IMR-90 (cell line): ENCODE measurements at regions of chr14 and their contacts with region 1.

Region 1: DNA sequence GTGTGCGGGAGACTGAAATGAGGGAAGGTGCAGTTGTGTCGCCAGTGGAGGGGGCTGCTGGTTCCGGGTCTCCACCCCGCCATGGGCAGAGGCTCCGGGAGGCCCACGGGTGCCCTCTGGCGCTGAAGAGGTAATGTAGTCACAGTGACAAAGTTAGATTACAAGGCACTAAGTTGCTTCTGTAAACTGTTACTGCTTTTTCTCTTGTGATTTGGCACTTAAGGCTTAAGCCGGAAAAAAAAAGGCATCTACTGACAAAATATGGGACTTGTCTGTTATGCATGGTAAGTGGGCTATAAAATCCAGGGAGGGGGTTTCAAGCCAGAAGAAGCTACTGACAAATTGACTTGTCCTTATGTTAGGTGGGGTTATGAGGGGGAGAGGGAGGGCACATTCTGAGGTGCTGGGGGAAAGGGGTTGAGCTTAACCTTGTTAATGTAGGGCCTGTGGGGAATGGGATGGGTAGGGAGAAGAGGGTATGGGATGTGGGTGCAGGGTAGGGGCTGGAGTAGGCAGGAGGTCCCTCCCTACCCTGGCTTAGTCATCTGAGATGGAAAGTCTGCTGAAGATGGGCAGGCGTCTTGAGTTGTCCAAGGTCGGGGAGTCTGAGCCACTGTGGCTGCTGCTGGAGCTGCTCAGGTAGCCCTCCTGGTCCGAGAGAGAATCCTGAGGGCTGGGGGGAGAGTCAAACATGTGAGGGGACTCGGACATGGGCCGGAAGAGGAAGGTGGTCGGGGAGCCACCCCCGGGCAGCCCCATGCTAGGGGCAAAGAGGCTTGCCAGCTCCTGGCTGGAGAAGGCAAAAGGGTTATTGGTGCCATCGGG is 3.7 kb downstream of the ZFP36L1 start:
- DNase-seq: peak; percentile 74
- ATAC-seq: 0 out of 2 replicates have a peak, but pooled peaks have one; percentile 6
- H3K4me3 ChIP-seq: peak overlapping the region; percentile 97
- H3K27ac ChIP-seq: peak overlapping the region; percentile 98
- H3K4me1 ChIP-seq: peaks cover 2% of the 10 kb centered on the region; the same call in 1 of the 2 replicates
- H3K27me3 ChIP-seq: no peaks in the 10 kb centered on the region
- CTCF ChIP-seq: peak; percentile 89
- POLR2A ChIP-seq: no peak
- RAD21 ChIP-seq: peak; percentile 94

Region 2: GRCh38 chr14:67943947-67944346 is 845.3 kb before region 1 on chr14:
- CTCF ChIA-PET with region 1: no interaction called
- POLR2A ChIA-PET with region 1: interaction called, 9 read pairs
- dilution Hi-C with region 1: no loop called
- in situ Hi-C with region 1: no loop called
- intact Hi-C with region 1: loop called (anchors 2 kb)
- DNase-seq: peak; percentile 87
- ATAC-seq: peak; percentile 53
- H3K4me3 ChIP-seq: no peak overlapping the region
- H3K27ac ChIP-seq: no peak overlapping the region
- H3K4me1 ChIP-seq: peaks cover 17% of the 10 kb centered on the region
- H3K27me3 ChIP-seq: no peaks in the 10 kb centered on the region
- CTCF ChIP-seq: peak; percentile 87
- POLR2A ChIP-seq: no peak
- RAD21 ChIP-seq: peak; percentile 88

Region 3: DNA sequence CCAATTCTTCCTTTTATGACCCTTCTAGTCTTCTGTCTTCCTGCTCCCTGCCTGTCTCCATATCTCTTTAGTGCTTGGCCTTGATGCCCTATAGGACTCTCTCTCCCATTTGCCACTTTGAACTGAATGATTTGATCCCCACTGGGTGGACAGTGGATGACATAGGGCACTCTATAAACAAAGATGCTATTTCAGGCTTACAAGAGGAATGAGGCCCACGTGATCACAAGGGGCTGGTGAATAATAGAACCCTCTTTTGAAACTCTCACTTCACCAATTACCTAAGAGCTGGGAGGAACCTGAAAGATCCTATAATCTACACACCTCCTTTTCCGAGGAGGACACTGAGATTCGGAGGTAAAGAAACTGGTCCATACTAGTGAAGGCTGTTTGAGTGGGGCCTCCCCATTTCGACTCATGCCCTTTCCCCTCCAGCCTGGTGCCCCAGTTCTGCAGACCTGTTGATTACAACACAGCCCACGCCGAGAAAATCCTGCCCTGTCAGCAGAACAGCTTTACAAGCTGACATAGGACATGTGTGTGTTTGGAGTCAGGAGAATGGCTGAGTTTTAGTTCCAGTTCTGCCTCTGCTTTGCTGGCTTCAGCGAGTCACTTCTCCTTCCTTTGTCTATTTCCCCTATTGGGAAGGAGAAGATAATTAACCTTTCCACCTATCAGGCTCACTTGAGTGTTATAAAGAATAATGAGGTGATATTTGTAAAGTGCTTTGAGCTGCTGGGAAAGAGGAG is 396.6 kb before region 1 on chr14:
- CTCF ChIA-PET with region 1: interaction called, 3 read pairs
- POLR2A ChIA-PET with region 1: no interaction called
- dilution Hi-C with region 1: no loop called
- in situ Hi-C with region 1: no loop called
- intact Hi-C with region 1: loop called (anchors 2 kb)
- DNase-seq: no peak
- ATAC-seq: no peak
- H3K4me3 ChIP-seq: no peak overlapping the region
- H3K27ac ChIP-seq: no peak overlapping the region
- H3K4me1 ChIP-seq: peaks cover 31% of the 10 kb centered on the region
- H3K27me3 ChIP-seq: no peaks in the 10 kb centered on the region
- CTCF ChIP-seq: no peak
- POLR2A ChIP-seq: no peak
- RAD21 ChIP-seq: no peak

Region 4: GRCh38 chr14:68577827-68578541 is 211.2 kb before region 1 on chr14:
- CTCF ChIA-PET with region 1: no interaction called
- POLR2A ChIA-PET with region 1: no interaction called
- dilution Hi-C with region 1: no loop called
- in situ Hi-C with region 1: no loop called
- intact Hi-C with region 1: loop called (anchors 1 kb)
- DNase-seq: peak; percentile 98
- ATAC-seq: peak; percentile 87
- H3K4me3 ChIP-seq: no peak overlapping the region
- H3K27ac ChIP-seq: peak overlapping the region; percentile 93
- H3K4me1 ChIP-seq: peaks cover 37% of the 10 kb centered on the region
- H3K27me3 ChIP-seq: no peaks in the 10 kb centered on the region
- CTCF ChIP-seq: 0 out of 2 replicates have a peak, but pooled peaks have one; percentile 1
- POLR2A ChIP-seq: no peak
- RAD21 ChIP-seq: peak; percentile 21; the same call in 1 of the 2 replicates

Region 5: GRCh38 chr14:68669087-68669511 is 120.1 kb before region 1 on chr14:
- CTCF ChIA-PET with region 1: interaction called, 5 read pairs
- POLR2A ChIA-PET with region 1: interaction called, 10 read pairs
- dilution Hi-C with region 1: no loop called
- in situ Hi-C with region 1: loop called (anchors 10 kb)
- intact Hi-C with region 1: loop called (anchors 2 kb)
- DNase-seq: no peak
- ATAC-seq: no peak
- H3K4me3 ChIP-seq: no peak overlapping the region
- H3K27ac ChIP-seq: no peak overlapping the region
- H3K4me1 ChIP-seq: peaks cover 32% of the 10 kb centered on the region
- H3K27me3 ChIP-seq: no peaks in the 10 kb centered on the region
- CTCF ChIP-seq: no peak
- POLR2A ChIP-seq: no peak
- RAD21 ChIP-seq: no peak

Region 6: GRCh38 chr14:68816262-68816942 is 27.2 kb after region 1 on chr14:
- CTCF ChIA-PET with region 1: interaction called, 3 read pairs
- POLR2A ChIA-PET with region 1: interaction called, 50 read pairs
- dilution Hi-C with region 1: no loop called
- in situ Hi-C with region 1: no loop called
- intact Hi-C with region 1: loop called (anchors 1 kb)
- DNase-seq: peak; percentile 86
- ATAC-seq: peak; percentile 86
- H3K4me3 ChIP-seq: peak overlapping the region; percentile 38
- H3K27ac ChIP-seq: peak overlapping the region; percentile 92
- H3K4me1 ChIP-seq: peaks cover 24% of the 10 kb centered on the region
- H3K27me3 ChIP-seq: no peaks in the 10 kb centered on the region
- CTCF ChIP-seq: peak; percentile 97
- POLR2A ChIP-seq: 0 out of 2 replicates have a peak, but pooled peaks have one; percentile 16
- RAD21 ChIP-seq: peak; percentile 98